ENCODE measurements at regions of chrX and their contacts with region 1.

Region 1: DNA sequence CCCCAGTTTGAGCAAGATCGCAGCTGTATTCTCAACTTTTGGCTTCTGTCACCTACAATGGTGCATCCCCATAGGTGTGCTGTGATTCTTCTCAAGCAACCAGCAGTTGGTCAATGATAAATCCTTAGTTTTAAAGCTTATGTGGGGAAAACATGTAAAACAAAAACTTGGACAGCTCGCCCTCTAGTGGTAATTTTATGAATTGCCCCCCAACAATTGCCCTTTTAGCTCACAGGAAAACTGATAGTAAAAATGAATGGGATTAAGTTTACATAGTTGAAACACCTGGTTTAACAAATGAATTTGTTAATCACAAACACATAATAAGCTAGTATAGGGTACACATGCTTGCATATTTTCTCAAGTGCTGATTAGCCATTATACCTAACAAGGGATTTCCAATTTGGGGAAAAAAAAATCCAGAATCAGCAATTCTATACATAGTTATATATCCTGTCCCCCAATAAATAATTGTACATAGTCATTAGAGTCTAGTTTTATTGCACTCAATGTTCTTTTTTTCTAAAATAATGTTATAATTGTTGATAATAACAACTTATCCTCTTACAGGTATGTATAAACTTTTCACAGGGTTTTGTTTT is 30.1 kb downstream of the TEX13A start:
- DNase-seq: peak in 1 of 2 donors; percentile 3
- ATAC-seq: no peak
- H3K4me3 ChIP-seq: no peak overlapping the region
- H3K27ac ChIP-seq: no peak overlapping the region
- H3K4me1 ChIP-seq: no peaks in the 10 kb centered on the region
- H3K27me3 ChIP-seq: peaks cover 0 to 22% (median 0%) of the 10 kb centered on the region in 7 donors
- CTCF ChIP-seq: peak; percentile 29 to 90 (median 60)

Region 2: DNA sequence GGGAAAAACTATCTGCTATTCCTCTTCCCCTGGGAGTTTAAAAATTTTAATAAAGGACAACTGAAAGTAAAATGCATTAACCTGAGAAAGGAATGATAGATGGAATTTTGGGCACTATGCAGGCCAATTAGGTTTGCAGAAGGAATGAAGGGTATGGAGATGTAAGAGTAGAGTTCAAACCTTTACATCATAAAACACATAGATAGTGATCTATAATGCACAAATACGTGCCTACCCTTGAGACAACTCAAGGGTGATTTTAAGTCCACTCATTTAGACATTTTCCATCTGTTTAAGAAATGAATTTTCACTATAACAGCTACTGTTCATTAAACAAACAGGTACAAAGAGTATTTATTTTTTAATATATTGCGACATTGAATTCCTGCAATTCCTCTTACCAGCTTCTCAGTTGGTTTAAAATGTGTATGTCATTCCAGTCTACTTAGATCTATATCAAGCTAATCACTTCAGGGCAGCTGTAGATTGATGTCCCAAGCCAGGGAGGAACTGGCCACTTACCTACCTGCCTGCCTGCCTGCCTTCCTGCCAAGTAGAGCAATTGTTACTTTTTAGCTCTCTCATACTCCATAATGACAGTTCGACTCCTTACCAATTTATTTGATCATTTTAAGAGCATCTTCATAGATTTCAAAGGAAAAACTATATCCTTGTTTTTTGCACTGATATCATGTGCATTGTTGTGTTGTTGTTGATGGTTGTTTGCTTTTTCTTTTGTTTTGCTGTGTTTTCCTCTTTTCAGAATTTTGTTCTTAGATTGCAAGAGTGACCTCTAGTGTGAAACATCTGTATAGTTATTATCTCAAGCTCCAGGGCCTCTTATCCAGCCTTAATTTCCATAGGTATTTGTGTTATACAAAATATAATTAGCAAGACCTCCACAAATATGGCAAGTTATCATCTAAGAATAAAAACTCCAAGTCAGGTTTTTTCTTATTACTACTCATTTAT is 511.0 kb after region 1 on chrX:
- intact Hi-C with region 1: loop called in 1 of 10 experiments (anchors 10 kb)
- DNase-seq: no peak
- ATAC-seq: no peak
- H3K4me3 ChIP-seq: no peak overlapping the region
- H3K27ac ChIP-seq: no peak overlapping the region
- H3K4me1 ChIP-seq: no peaks in the 10 kb centered on the region
- H3K27me3 ChIP-seq: peaks cover 0 to 14% (median 0%) of the 10 kb centered on the region in 7 donors
- CTCF ChIP-seq: peak in 7 of 9 donors; percentile 16 to 47 (median 29)